Naive thymus-derived CD4-positive, alpha-beta T cell (primary cell): ENCODE measurements at regions of chr7 and their contacts with region 1.

Region 1: GRCh38 chr7:923108-924041 is 31.1 kb downstream of the ADAP1 start:
- DNase-seq: peak; percentile 67 to 91 (median 90)
- ATAC-seq: peak; percentile 93
- H3K4me3 ChIP-seq: peak overlapping the region; percentile 84
- H3K4me3 Mint-ChIP-seq: peak overlapping the region; percentile 77 to 90 (median 88)
- H3K27ac ChIP-seq: peak overlapping the region; percentile 84
- H3K27ac Mint-ChIP-seq: peak overlapping the region; percentile 89 to 96 (median 92)
- H3K4me1 ChIP-seq: peaks cover 30% of the 10 kb centered on the region in 2 donors
- H3K4me1 Mint-ChIP-seq: peaks cover 19 to 34% (median 25%) of the 10 kb centered on the region in 7 donors
- H3K27me3 ChIP-seq: no peaks in the 10 kb centered on the region
- H3K27me3 Mint-ChIP-seq: no peaks in the 10 kb centered on the region

Region 2: DNA sequence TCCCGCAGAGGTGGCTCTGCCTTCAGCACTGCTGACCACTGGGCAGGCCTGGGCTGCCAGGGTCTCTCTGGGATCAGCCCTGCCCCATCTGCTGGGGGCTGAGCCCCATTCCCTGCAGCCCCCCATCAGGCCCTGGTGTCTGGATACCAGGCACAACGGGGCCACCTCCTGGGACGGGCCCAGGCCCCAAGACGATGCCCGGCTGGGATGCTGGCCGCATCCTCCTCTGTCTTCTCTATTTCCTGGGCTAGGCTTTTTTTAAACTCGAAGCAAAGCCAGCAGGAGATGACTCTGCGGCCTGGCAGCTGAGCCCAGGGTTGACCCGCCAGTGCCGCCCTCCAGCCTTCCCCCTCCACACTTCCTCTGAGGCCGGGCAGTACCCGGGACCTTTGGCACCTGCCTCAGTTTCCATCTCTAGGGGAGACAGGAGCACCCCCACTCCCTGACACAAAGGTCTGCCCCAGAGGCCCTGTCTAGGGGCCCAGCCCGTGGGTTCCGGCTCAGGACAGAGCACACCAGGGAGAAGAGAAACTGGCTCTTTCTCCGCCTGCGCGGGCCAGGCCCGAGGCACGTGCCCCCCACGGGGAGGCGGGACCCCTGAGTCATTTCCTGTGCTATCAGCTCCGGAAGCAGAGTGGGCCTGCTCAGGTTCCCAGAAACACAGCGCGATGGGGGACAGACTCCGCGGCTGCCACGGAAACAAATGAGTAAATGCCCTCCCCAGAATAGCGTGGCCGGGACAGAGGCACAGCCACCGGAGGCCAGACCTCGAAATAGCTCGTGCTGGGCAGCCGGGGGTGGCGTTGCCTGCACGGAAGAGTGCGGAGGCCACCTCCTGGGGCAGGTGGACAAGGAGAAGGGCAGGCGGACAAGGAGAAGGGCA is 319.1 kb before region 1 on chr7:
- CTCF ChIA-PET with region 1: no interaction called
- POLR2A ChIA-PET with region 1: no interaction called
- intact Hi-C with region 1: loop called in 1 of 2 experiments (anchors 5 kb)
- DNase-seq: peak; percentile 74 to 91 (median 87)
- ATAC-seq: peak; percentile 89
- H3K4me3 ChIP-seq: peak overlapping the region; percentile 26
- H3K4me3 Mint-ChIP-seq: peak overlapping the region; percentile 77 to 98 (median 88)
- H3K27ac ChIP-seq: peak overlapping the region; percentile 86
- H3K27ac Mint-ChIP-seq: peak overlapping the region; percentile 93 to 100 (median 99)
- H3K4me1 ChIP-seq: peaks cover 48 to 56% of the 10 kb centered on the region in 2 donors
- H3K4me1 Mint-ChIP-seq: peaks cover 37 to 72% (median 49%) of the 10 kb centered on the region in 7 donors
- H3K27me3 ChIP-seq: no peaks in the 10 kb centered on the region
- H3K27me3 Mint-ChIP-seq: no peaks in the 10 kb centered on the region

Region 3: GRCh38 chr7:816300-816750 is 107.0 kb before region 1 on chr7:
- CTCF ChIA-PET with region 1: no interaction called
- POLR2A ChIA-PET with region 1: interaction called, 4 read pairs
- intact Hi-C with region 1: loop called (anchors 2 kb)
- DNase-seq: peak; percentile 95 to 98 (median 97)
- ATAC-seq: peak; percentile 98
- H3K4me3 ChIP-seq: peak overlapping the region; percentile 52
- H3K4me3 Mint-ChIP-seq: peak overlapping the region; percentile 60 to 98 (median 88)
- H3K27ac ChIP-seq: peak overlapping the region; percentile 59
- H3K27ac Mint-ChIP-seq: peak overlapping the region in 3 of 9 donors; percentile 9 to 85 (median 65)
- H3K4me1 ChIP-seq: peaks cover 27 to 32% of the 10 kb centered on the region in 2 donors
- H3K4me1 Mint-ChIP-seq: peaks cover 45 to 72% (median 61%) of the 10 kb centered on the region in 7 donors
- H3K27me3 ChIP-seq: no peaks in the 10 kb centered on the region
- H3K27me3 Mint-ChIP-seq: peaks cover 0 to 42% (median 0%) of the 10 kb centered on the region in 5 donors

Region 4: DNA sequence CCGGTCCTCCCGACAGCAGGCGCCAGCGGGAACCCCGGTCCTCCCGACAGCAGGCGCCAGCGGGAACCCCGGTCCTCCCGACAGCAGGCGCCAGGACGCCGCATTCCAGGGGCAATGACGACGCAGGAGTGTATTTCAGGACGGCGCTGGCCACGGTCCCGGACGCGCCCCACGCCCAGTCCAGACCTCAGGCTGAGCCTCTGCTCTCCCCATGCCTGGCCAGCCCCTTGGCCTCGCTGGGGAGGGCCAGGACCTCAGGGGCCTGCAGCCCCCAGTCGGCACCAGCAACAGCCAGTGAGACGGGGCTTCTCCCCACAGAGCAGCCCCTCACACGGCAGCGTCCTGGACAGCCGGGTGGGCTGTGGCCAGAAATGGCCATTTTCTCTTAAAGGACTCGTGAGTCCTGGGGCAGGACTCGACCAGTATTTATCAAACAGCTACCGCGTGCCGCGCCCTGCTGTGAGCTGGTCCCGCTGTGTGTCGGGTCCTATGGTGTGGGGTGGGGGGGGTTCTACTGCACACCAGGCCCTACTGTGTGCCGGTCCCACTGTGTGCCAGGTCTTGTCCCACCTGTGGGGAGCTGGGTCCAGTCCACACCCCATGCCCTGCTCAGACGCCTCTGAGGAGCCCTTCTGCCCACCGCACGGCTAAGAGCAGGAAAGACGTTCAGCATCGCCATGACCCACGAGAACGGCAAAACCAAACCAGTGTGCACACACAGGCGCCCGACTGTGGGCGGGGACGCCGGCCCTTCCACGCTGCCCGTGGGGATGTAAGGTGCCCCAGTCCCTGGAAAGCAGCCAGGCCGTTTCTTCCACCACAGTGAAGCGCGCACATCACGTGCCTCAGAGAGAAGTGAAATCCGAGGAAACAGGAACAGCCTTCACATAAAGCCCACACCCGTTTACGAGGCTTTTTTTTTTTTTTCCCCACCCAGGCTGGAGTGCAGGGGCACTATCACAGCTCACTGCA is 13.7 kb before region 1 on chr7:
- CTCF ChIA-PET with region 1: interaction called, 13 read pairs
- POLR2A ChIA-PET with region 1: interaction called, 27 read pairs
- intact Hi-C with region 1: loop called (anchors 1 kb)
- DNase-seq: peak in 3 of 9 donors; percentile 19 to 37 (median 29)
- ATAC-seq: peak; percentile 63
- H3K4me3 ChIP-seq: peak overlapping the region; percentile 9
- H3K4me3 Mint-ChIP-seq: peak overlapping the region in 9 of 10 donors; percentile 60 to 82 (median 77)
- H3K27ac ChIP-seq: no peak overlapping the region
- H3K27ac Mint-ChIP-seq: peak overlapping the region in 7 of 9 donors; percentile 28 to 80 (median 76)
- H3K4me1 ChIP-seq: peaks cover 0 to 11% of the 10 kb centered on the region in 2 donors
- H3K4me1 Mint-ChIP-seq: peaks cover 0 to 13% (median 10%) of the 10 kb centered on the region in 7 donors
- H3K27me3 ChIP-seq: no peaks in the 10 kb centered on the region
- H3K27me3 Mint-ChIP-seq: peaks cover 0 to 2% (median 0%) of the 10 kb centered on the region in 5 donors

Region 5: DNA sequence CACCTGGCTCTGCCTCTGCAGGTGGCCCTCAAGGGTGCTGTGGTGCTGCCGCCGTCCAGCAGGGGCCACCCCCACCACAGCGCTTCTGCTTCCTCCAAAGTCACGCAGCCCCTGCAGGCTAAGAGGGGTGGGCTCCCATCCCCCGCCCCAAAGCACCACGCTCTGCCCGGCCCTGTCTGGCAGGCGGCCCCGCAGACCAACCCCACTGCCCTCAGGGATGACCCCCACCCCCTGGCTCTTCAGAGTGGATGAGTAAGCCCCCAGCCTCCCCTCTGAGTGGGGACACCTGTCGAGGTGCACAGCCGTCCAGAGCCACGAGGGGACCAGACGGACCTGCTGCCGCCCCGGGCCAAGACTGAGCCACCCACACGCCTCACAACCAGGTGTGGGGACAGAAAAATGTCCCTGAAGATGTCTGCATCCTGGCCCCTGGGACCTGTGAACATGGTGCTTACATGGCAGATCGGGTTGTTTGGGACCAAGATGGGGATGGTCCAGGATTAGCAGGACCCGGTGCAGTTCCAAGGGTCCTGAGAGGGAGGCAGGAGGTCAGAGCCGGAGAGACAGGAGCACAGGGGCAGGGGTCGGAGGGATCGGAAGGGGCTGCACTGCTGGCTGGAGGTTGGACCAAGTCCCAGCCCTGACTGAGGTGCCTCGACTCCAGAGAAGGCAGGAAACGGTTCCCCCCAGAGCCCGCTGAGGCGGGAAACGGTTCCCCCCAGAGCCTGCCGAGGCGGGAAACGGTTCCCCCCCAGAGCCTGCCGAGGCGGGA is 40.1 kb after region 1 on chr7:
- CTCF ChIA-PET with region 1: interaction called, 3 read pairs
- POLR2A ChIA-PET with region 1: no interaction called
- intact Hi-C with region 1: loop called in 1 of 2 experiments (anchors 2 kb)
- DNase-seq: peak in 2 of 9 donors; percentile 25 to 35
- ATAC-seq: peak; percentile 12
- H3K4me3 ChIP-seq: no peak overlapping the region
- H3K4me3 Mint-ChIP-seq: peak overlapping the region in 8 of 10 donors; percentile 17 to 79 (median 70)
- H3K27ac ChIP-seq: no peak overlapping the region
- H3K27ac Mint-ChIP-seq: peak overlapping the region in 5 of 9 donors; percentile 37 to 72 (median 49)
- H3K4me1 ChIP-seq: peaks cover 0 to 5% of the 10 kb centered on the region in 2 donors
- H3K4me1 Mint-ChIP-seq: peaks cover 5 to 38% (median 31%) of the 10 kb centered on the region in 7 donors
- H3K27me3 ChIP-seq: no peaks in the 10 kb centered on the region
- H3K27me3 Mint-ChIP-seq: peaks cover 0 to 6% (median 0%) of the 10 kb centered on the region in 5 donors

Region 6: DNA sequence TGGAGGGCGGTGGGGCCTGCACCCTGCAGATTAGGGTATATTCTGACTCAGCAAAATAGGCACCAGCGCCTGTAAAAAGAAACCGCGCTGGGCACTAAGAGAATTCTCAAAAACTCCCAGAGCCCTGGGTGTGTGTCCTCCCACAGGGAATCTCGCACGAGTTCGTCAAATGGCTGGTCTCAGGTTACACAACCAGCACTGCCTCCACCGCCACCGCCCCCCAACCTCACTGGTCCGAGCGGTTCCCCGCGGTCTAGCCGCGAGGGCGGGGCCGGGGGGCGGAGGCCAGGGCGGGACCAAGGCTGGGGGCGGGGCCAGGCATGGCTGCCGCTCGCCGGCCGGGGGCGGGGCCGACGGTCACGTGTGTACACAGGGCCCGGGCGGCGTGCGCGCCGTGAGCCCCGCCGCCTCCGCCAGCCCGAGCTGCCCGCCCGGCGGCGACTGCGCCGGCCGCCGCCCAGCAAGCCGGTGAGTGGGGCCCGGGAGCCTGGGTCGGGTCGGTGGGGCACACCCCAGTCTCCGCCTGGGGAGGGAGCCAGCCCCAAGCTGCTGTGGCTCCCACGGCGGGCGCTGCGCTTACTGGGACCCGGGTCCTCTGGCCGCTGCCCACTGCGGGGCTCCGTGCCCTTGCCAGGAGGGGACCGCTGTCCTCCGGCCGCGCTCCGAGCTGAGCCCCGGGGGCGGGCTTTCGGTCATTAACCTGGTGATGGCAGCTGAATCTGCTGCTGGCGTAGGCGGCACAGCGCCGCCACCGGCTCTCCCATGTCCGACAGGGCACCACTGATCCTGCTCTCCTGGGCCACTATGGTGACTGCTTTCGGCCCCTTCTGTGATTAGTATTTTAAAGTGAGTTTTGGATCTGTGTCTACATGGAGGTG is 121.1 kb after region 1 on chr7 and contains the start of gene GPR146:
- CTCF ChIA-PET with region 1: no interaction called
- POLR2A ChIA-PET with region 1: no interaction called
- intact Hi-C with region 1: loop called (anchors 5 kb)
- DNase-seq: peak; percentile 73 to 97 (median 86)
- ATAC-seq: peak; percentile 96
- H3K4me3 ChIP-seq: peak within 1 kb of the TSS; percentile 79
- H3K4me3 Mint-ChIP-seq: peak within 1 kb of the TSS; percentile 88 to 94 (median 91)
- H3K27ac ChIP-seq: peak within 1 kb of the TSS; percentile 83
- H3K27ac Mint-ChIP-seq: peak within 1 kb of the TSS; percentile 62 to 93 (median 85)
- H3K4me1 ChIP-seq: peaks cover 49 to 54% of the 10 kb centered on the region in 2 donors
- H3K4me1 Mint-ChIP-seq: peaks cover 42 to 75% (median 56%) of the 10 kb centered on the region in 7 donors
- H3K27me3 ChIP-seq: no peaks in the 10 kb centered on the region
- H3K27me3 Mint-ChIP-seq: peaks cover 0 to 13% (median 0%) of the 10 kb centered on the region in 5 donors
- total RNA-seq, gene GPR146: 10.1 to 26.5 (median 15.9) TPM